ENCODE measurements at regions of chr9 and their contacts with region 1.

Region 1: GRCh38 chr9:119556129-119556875 is 187.1 kb upstream of the BRINP1 start:
- DNase-seq: peak in 3 of 9 donors; percentile 1 to 66 (median 2)
- ATAC-seq: peak; percentile 54
- H3K4me3 ChIP-seq: no peak overlapping the region
- H3K4me3 Mint-ChIP-seq: peak overlapping the region in 3 of 10 donors; percentile 5 to 41 (median 8)
- H3K27ac ChIP-seq: no peak overlapping the region
- H3K27ac Mint-ChIP-seq: no peak overlapping the region
- H3K4me1 ChIP-seq: no peaks in the 10 kb centered on the region
- H3K4me1 Mint-ChIP-seq: peaks cover 0 to 7% (median 0%) of the 10 kb centered on the region in 7 donors
- H3K27me3 ChIP-seq: no peaks in the 10 kb centered on the region
- H3K27me3 Mint-ChIP-seq: peaks cover 10 to 34% (median 22%) of the 10 kb centered on the region in 5 donors

Region 2: DNA sequence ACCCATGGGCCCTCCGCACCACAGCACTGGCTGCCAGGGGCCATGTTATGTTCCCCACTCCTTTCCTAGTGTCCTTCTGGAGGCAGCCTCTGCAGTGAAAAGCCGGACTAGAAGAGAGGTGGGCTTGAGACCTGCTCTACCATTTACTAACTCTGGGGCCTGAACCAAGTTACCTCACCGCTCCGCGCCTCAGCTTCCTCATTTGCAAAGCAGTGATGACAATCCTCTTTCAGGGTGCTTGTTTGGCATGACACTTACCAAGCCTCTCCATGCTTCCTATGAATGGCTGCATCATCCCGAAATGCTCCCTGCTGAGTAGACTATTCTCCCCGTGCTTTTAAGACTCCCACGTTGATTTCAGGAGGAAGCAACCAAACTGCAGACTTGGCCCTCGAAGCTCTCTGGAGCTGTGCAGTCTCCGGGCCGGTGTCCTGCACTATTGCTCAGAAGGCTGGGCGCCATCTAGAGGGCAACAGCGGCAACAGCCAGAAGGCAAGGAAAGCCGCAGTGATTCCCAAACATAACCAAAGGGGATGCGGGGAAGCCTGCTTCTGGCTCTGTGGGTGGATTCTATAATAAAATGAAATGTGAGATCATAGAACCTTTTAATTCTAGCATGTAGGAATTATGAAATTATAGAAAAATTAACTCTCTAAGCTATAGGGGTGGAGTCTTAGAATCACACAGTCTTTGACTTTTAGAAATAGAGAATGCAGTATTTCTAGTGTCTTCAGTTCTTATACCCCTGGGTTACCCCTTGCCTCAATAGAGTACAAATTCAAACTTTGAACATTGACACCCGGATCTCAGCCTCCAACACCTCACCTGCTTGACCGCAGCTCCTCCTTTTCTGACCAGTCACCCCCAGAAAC is 412.8 kb after region 1 on chr9:
- CTCF ChIA-PET with region 1: no interaction called
- POLR2A ChIA-PET with region 1: no interaction called
- intact Hi-C with region 1: loop called in 1 of 2 experiments (anchors 10 kb)
- DNase-seq: peak in 6 of 9 donors; percentile 0 to 43 (median 2)
- ATAC-seq: peak; percentile 72
- H3K4me3 ChIP-seq: no peak overlapping the region
- H3K4me3 Mint-ChIP-seq: no peak overlapping the region
- H3K27ac ChIP-seq: no peak overlapping the region
- H3K27ac Mint-ChIP-seq: no peak overlapping the region
- H3K4me1 ChIP-seq: no peaks in the 10 kb centered on the region
- H3K4me1 Mint-ChIP-seq: peaks cover 0 to 5% (median 2%) of the 10 kb centered on the region in 7 donors
- H3K27me3 ChIP-seq: no peaks in the 10 kb centered on the region
- H3K27me3 Mint-ChIP-seq: peaks cover 1 to 28% (median 19%) of the 10 kb centered on the region in 5 donors

Region 3: GRCh38 chr9:120348951-120349429 is 792.7 kb after region 1 on chr9:
- CTCF ChIA-PET with region 1: no interaction called
- POLR2A ChIA-PET with region 1: no interaction called
- intact Hi-C with region 1: loop called in 1 of 2 experiments (anchors 5 kb)
- DNase-seq: no peak
- ATAC-seq: no peak
- H3K4me3 ChIP-seq: no peak overlapping the region
- H3K4me3 Mint-ChIP-seq: no peak overlapping the region
- H3K27ac ChIP-seq: no peak overlapping the region
- H3K27ac Mint-ChIP-seq: peak overlapping the region in 1 of 9 donors; percentile 79
- H3K4me1 ChIP-seq: no peaks in the 10 kb centered on the region
- H3K4me1 Mint-ChIP-seq: peaks cover 0 to 8% (median 0%) of the 10 kb centered on the region in 7 donors
- H3K27me3 ChIP-seq: no peaks in the 10 kb centered on the region
- H3K27me3 Mint-ChIP-seq: peaks cover 0 to 8% (median 7%) of the 10 kb centered on the region in 5 donors

Region 4: DNA sequence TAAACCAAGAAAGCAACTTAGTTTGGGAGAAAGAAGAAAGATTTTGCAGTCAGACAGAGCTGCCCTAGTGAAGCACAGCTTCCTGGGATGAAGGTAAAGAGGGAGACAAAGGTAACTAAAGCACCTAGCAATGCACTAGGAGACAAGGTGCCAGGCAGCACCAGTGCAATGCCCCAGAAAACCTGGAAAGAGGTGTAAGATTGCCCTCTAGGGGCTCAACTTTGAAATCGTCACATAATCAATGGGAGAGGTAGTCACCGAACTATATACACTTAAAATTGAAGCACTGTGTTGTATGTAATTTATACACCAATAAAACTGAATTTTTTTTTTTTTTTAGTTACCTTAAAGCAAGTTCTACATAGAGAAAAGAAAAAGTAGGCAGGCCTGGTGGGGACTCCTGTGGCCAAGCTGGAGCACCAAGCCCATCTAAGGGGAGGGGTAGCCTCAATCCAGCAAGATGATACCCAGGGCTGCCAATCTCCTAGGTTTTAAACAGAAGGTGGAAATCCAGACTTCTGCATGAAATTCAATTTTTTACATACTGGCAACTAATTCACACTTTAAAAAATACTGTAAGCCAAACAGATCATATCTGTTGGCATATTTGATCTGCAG is 975.5 kb after region 1 on chr9:
- CTCF ChIA-PET with region 1: no interaction called
- POLR2A ChIA-PET with region 1: no interaction called
- intact Hi-C with region 1: loop called in 1 of 2 experiments (anchors 5 kb)
- DNase-seq: no peak
- ATAC-seq: no peak
- H3K4me3 ChIP-seq: no peak overlapping the region
- H3K4me3 Mint-ChIP-seq: no peak overlapping the region
- H3K27ac ChIP-seq: no peak overlapping the region
- H3K27ac Mint-ChIP-seq: no peak overlapping the region
- H3K4me1 ChIP-seq: no peaks in the 10 kb centered on the region
- H3K4me1 Mint-ChIP-seq: peaks cover 0 to 14% (median 4%) of the 10 kb centered on the region in 7 donors
- H3K27me3 ChIP-seq: no peaks in the 10 kb centered on the region
- H3K27me3 Mint-ChIP-seq: no peaks in the 10 kb centered on the region